ENCODE measurements at regions of chr1 and their contacts with region 1.

Region 1: GRCh38 chr1:202184750-202185460 is 8.7 kb upstream of the LGR6 start:
- DNase-seq: no peak
- H3K4me3 ChIP-seq: no peak overlapping the region
- H3K27ac ChIP-seq: no peak overlapping the region
- H3K4me1 ChIP-seq: peaks cover 0 to 8% (median 7%) of the 10 kb centered on the region in 4 donors
- H3K27me3 ChIP-seq: peaks cover 0 to 75% (median 2%) of the 10 kb centered on the region in 4 donors
- CTCF ChIP-seq: peak; percentile 54 to 85 (median 72)
- EP300 ChIP-seq: no peak
- POLR2A ChIP-seq: no peak

Region 2: GRCh38 chr1:202315576-202316168 is 130.8 kb after region 1 on chr1:
- intact Hi-C with region 1: loop called (anchors 5 kb)
- DNase-seq: no peak
- H3K4me3 ChIP-seq: no peak overlapping the region
- H3K27ac ChIP-seq: no peak overlapping the region
- H3K4me1 ChIP-seq: peaks cover 0 to 6% (median 3%) of the 10 kb centered on the region in 4 donors
- H3K27me3 ChIP-seq: peaks cover 0 to 24% (median 0%) of the 10 kb centered on the region in 4 donors
- CTCF ChIP-seq: peak; percentile 74 to 88 (median 81)
- EP300 ChIP-seq: no peak
- POLR2A ChIP-seq: no peak

Measured in esophagus muscularis mucosa (tissue), 4 donors.